Activated T-helper 1 cell treated with anti-CD3 and anti-CD28 coated beads, Interleukin-12 subunit alpha, Interleukin-12 subunit beta, Interleukin-2, Interleukin-4 antibody, amounts not matched to agents 30 ng/mL and 10 ng/mL and 1 ng/mL, durations not matched to agents 14 hours and 24 hours and 36 hours (primary cell): ENCODE measurements at regions of chr21 and their contacts with region 1.

Region 1: GRCh38 chr21:28745131-28746016 is 247.3 kb downstream of the LTN1 start:
- DNase-seq: peak; percentile 46
- H3K4me3 Mint-ChIP-seq: no peak overlapping the region
- H3K27ac Mint-ChIP-seq: no peak overlapping the region
- H3K4me1 Mint-ChIP-seq: no peaks in the 10 kb centered on the region
- H3K27me3 Mint-ChIP-seq: no peaks in the 10 kb centered on the region

Region 2: GRCh38 chr21:26769613-26770188 is 1975.7 kb before region 1 on chr21:
- intact Hi-C with region 1: loop called (anchors 5 kb)
- DNase-seq: no peak
- H3K4me3 Mint-ChIP-seq: no peak overlapping the region
- H3K27ac Mint-ChIP-seq: no peak overlapping the region
- H3K4me1 Mint-ChIP-seq: no peaks in the 10 kb centered on the region
- H3K27me3 Mint-ChIP-seq: peaks cover 11% of the 10 kb centered on the region

Region 3: DNA sequence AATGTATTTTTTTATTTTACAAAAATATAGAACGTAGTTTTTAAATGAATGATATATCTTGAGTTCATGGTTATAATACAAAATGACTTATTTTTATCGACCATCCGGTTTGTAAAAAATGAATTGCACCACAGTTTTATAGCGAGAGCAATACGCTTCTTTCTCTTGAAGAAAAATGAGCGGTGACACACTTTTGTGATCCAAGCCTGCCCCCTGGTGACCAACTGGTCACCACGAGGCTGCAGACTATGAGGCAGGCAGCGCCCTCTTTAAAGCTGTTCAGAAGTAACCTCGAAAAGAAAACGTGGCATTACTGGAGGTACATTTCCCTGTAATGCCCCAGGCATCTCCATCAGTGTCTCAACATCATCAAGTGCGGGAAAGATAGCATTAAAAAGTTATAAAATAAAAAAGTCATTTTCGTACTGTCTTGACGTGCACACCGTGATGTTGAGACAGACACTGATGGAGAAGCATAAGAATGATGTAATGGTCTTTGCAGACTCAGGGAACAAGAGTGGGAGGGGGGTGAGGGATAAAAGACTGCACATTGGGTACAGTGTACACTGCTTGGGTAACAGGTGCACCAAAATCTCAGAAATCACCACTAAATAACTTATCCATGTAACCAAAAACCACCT is 1044.3 kb before region 1 on chr21:
- intact Hi-C with region 1: loop called (anchors 1 kb)
- DNase-seq: peak; percentile 25
- H3K4me3 Mint-ChIP-seq: no peak overlapping the region
- H3K27ac Mint-ChIP-seq: no peak overlapping the region
- H3K4me1 Mint-ChIP-seq: no peaks in the 10 kb centered on the region
- H3K27me3 Mint-ChIP-seq: peaks cover 3% of the 10 kb centered on the region

Region 4: GRCh38 chr21:28357743-28358142 is 387.6 kb before region 1 on chr21:
- intact Hi-C with region 1: loop called (anchors 10 kb)
- DNase-seq: no peak
- H3K4me3 Mint-ChIP-seq: no peak overlapping the region
- H3K27ac Mint-ChIP-seq: no peak overlapping the region
- H3K4me1 Mint-ChIP-seq: no peaks in the 10 kb centered on the region
- H3K27me3 Mint-ChIP-seq: no peaks in the 10 kb centered on the region

Region 5: GRCh38 chr21:28943631-28944030 is 198.3 kb after region 1 on chr21:
- intact Hi-C with region 1: loop called (anchors 1 kb)
- DNase-seq: no peak
- H3K4me3 Mint-ChIP-seq: no peak overlapping the region
- H3K27ac Mint-ChIP-seq: no peak overlapping the region
- H3K4me1 Mint-ChIP-seq: peaks cover 4% of the 10 kb centered on the region
- H3K27me3 Mint-ChIP-seq: no peaks in the 10 kb centered on the region